Lower leg skin (tissue), 4 donors: ENCODE measurements at regions of chr3 and their contacts with region 1.

Region 1: GRCh38 chr3:152416808-152417580 is 148.3 kb downstream of the MBNL1 start:
- DNase-seq: no peak
- H3K4me3 ChIP-seq: no peak overlapping the region
- CTCF ChIP-seq: no peak
- POLR2A ChIP-seq: no peak

Region 2: GRCh38 chr3:152298393-152299242 is 118.4 kb before region 1 on chr3:
- intact Hi-C with region 1: no loop called
- DNase-seq: peak in 1 of 2 donors; percentile 87
- H3K4me3 ChIP-seq: no peak overlapping the region
- CTCF ChIP-seq: no peak
- POLR2A ChIP-seq: no peak

Region 3: DNA sequence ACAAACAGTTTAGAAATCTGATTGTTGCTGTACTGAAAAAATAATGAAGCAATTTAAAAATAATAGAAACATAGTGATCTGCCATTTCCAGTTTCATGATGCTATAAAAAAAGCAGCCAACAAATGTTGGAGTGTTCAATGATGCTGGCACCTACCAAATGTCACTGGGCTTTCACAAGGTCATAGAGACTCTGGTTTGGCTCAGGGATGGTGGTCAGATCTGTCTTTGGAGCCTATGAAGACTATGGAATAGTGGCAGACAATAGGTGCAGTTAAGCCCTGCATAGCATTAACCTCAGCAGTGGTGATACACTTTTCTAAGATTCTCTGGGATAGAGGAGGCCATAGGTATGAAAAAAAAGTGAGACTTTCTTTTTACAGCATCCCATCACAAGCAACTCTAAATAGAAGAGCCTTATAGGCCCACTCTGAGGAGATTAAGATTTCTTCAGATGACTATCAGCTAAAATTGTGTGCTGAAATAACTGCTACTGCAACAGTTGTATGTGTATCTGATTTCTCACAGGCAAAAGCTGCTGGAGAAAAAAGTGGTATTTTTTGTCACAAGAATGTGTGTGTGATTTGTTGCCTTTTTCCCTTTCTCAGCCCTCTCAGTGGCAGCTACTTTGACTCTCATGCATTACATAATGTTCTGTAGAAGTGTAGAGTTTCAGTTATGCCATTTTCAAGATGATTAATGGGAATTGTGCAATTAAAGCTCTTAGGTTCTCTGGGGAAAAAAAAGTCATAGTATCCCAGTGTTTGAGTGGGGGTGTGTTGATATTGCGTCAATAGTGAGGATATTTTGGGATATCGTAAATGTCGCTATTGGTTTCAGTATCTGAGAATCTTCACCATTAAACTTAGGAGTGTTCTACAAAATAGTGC is 10.8 kb before region 1 on chr3:
- intact Hi-C with region 1: loop called (anchors 1 kb)
- DNase-seq: no peak
- H3K4me3 ChIP-seq: no peak overlapping the region
- CTCF ChIP-seq: no peak
- POLR2A ChIP-seq: no peak